Naive thymus-derived CD4-positive, alpha-beta T cell (primary cell): ENCODE measurements at regions of chr10 and their contacts with region 1.

Region 1: DNA sequence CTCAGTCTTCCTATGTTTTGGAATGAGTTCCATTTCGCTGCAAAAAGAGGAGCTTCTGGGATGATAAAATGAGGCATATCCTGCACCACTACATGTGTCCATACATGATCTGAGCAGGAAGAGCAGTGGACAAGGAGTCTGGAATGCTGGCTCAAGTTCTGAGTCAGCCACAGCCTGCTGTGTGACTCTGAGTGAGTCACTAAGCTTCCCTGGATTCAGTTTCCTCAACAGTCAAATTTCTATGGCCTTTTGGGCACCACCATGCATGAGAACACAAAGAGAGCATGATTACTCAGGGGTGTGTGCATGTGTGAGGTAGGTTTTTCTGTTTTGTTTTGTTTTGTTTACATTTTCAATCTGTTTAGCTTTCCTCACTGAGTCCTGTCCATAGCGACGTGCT is 254.6 kb downstream of the ANKRD30A start:
- DNase-seq: no peak
- ATAC-seq: no peak
- H3K4me3 ChIP-seq: no peak overlapping the region
- H3K4me3 Mint-ChIP-seq: no peak overlapping the region
- H3K27ac ChIP-seq: no peak overlapping the region
- H3K27ac Mint-ChIP-seq: no peak overlapping the region
- H3K4me1 ChIP-seq: no peaks in the 10 kb centered on the region
- H3K4me1 Mint-ChIP-seq: no peaks in the 10 kb centered on the region
- H3K27me3 ChIP-seq: no peaks in the 10 kb centered on the region
- H3K27me3 Mint-ChIP-seq: no peaks in the 10 kb centered on the region

Region 2: DNA sequence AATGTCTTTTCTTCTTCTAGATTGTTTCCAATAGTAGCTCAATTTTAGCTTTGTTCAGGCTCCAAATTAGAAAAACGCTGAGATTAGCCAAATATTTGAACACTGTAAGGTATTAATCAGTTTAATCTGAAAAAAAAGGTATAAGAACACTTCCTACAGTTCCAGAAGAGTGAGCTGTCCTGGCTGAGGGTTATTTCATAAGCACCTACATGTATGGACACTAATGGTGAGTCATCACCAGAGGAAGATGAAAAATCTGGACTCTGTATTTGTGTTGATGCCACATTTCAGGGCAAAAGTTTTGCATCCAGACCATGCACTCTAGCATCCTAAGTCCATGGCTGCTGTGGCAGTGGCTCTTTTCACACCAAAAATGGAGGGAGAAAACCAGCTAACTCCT is 65.1 kb before region 1 on chr10:
- CTCF ChIA-PET with region 1: no interaction called
- POLR2A ChIA-PET with region 1: no interaction called
- intact Hi-C with region 1: loop called in 1 of 2 experiments (anchors 10 kb)
- DNase-seq: no peak
- ATAC-seq: no peak
- H3K4me3 ChIP-seq: no peak overlapping the region
- H3K4me3 Mint-ChIP-seq: no peak overlapping the region
- H3K27ac ChIP-seq: no peak overlapping the region
- H3K27ac Mint-ChIP-seq: no peak overlapping the region
- H3K4me1 ChIP-seq: no peaks in the 10 kb centered on the region
- H3K4me1 Mint-ChIP-seq: no peaks in the 10 kb centered on the region
- H3K27me3 ChIP-seq: no peaks in the 10 kb centered on the region
- H3K27me3 Mint-ChIP-seq: no peaks in the 10 kb centered on the region